ENCODE measurements at regions of chr21 and their contacts with region 1.

Region 1: GRCh38 chr21:38219049-38219628 is 37.7 kb upstream of the KCNJ15 start:
- DNase-seq: peak; percentile 58
- H3K4me3 ChIP-seq: no peak overlapping the region
- H3K27ac ChIP-seq: no peak overlapping the region
- H3K27me3 ChIP-seq: no peaks in the 10 kb centered on the region
- CTCF ChIP-seq: peak; percentile 98

Region 2: DNA sequence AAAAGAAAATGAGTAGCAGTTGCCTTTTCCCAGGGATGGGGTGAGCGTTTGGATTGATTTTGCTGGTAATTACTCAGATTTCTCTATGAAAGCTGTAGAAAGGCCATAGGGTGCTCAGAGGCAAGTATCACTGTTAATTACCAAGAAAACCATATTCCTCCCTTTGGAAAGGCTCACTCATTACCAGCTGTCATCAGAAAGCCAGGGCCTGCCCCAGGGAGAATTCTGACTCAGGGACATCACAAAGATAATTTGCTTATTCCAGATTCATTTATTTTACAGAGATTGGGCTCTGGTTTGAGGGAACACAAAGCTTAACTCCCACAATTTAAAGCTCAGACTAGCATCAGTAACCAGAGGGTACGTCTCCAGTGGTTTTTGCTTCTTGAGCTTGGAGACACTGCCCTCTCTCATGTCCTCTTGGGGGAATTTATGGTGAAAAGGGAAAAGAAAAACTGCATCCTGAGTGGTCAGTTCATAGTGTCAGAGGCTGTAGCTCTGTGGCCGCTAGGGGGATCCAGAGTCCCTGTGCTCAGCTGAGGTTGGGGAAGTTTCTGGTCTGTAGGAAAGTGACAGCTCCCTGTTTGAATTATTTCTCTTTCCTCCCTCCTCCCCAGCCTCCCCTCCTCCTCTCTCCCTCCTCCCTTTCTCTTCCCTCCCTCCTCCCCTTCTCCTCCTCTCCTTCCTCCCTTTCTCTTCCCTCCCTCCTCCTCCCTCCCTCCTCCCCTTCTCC is 507.1 kb before region 1 on chr21:
- CTCF ChIA-PET with region 1: interaction called, 11 read pairs
- POLR2A ChIA-PET with region 1: no interaction called
- DNase-seq: peak; percentile 30
- H3K4me3 ChIP-seq: no peak overlapping the region
- H3K27ac ChIP-seq: no peak overlapping the region
- H3K27me3 ChIP-seq: peaks cover 7% of the 10 kb centered on the region
- CTCF ChIP-seq: peak; percentile 99

Region 3: GRCh38 chr21:38170280-38170679 is 48.9 kb before region 1 on chr21:
- CTCF ChIA-PET with region 1: interaction called, 10 read pairs
- POLR2A ChIA-PET with region 1: no interaction called
- DNase-seq: no peak
- H3K4me3 ChIP-seq: no peak overlapping the region
- H3K27ac ChIP-seq: no peak overlapping the region
- H3K27me3 ChIP-seq: no peaks in the 10 kb centered on the region
- CTCF ChIP-seq: peak; percentile 43; the same call in 1 of the 2 replicates

Region 4: DNA sequence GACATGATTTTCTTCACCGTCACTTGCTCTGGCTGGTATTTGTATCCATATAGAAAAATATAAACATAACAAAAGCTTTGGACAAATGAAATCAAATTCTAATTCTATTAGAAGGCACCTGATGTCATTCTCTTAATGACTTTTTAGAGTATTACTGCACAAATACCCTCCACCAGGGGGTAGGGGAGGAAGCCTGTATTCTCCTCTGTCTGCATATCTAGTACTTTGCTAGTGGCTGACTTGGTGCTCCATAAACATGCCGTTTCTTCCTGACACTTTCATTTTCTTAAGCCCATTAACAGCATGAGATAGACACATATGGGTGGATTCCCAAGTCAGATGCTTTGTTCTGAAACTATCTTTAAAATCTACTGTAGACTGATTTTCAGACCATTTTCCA is 17.1 kb after region 1 on chr21:
- CTCF ChIA-PET with region 1: interaction called, 50 read pairs
- POLR2A ChIA-PET with region 1: no interaction called
- DNase-seq: no peak
- H3K4me3 ChIP-seq: no peak overlapping the region
- H3K27ac ChIP-seq: no peak overlapping the region
- H3K27me3 ChIP-seq: no peaks in the 10 kb centered on the region
- CTCF ChIP-seq: peak; percentile 38; the same call in 1 of the 2 replicates

Region 5: GRCh38 chr21:38327984-38328383 is 108.8 kb after region 1 on chr21:
- CTCF ChIA-PET with region 1: interaction called, 11 read pairs
- POLR2A ChIA-PET with region 1: no interaction called
- DNase-seq: no peak
- H3K4me3 ChIP-seq: no peak overlapping the region
- H3K27ac ChIP-seq: no peak overlapping the region
- H3K27me3 ChIP-seq: peaks cover 4% of the 10 kb centered on the region
- CTCF ChIP-seq: no peak

Measured in AG04450 (cell line).